CD4-positive, alpha-beta T cell (primary cell): ENCODE measurements at regions of chr17 and their contacts with region 1.

Region 1: DNA sequence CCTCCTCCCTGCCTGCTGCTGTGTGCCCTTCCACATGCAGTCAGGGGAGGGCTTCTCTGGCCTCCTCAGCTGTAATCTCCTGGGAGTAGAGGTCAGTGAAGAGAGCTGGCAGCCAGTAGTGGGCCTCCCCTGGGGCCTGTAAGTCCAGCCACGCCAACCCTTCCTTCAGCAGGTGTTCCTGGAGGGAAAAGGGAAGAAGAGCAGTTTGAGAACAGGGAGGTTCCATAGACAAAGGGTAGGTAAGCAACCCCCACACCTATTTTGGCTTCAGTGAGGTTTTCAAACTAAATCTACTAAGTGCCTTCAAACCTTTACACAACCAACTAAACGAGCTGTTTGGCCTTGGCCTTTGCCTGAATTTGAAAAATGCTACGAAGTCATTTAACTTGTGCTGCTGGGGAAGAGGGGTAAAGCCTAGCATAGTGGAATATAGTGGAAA is 14.2 kb downstream of the SNF8 start:
- DNase-seq: no peak
- ATAC-seq: no peak
- H3K4me3 ChIP-seq: no peak overlapping the region
- H3K4me3 Mint-ChIP-seq: no peak overlapping the region
- H3K27ac ChIP-seq: no peak overlapping the region
- H3K27ac Mint-ChIP-seq: peak overlapping the region; percentile 8
- H3K4me1 ChIP-seq: no peaks in the 10 kb centered on the region
- H3K4me1 Mint-ChIP-seq: no peaks in the 10 kb centered on the region
- H3K27me3 ChIP-seq: no peaks in the 10 kb centered on the region
- H3K27me3 Mint-ChIP-seq: no peaks in the 10 kb centered on the region
- CTCF ChIP-seq: no peak

Region 2: DNA sequence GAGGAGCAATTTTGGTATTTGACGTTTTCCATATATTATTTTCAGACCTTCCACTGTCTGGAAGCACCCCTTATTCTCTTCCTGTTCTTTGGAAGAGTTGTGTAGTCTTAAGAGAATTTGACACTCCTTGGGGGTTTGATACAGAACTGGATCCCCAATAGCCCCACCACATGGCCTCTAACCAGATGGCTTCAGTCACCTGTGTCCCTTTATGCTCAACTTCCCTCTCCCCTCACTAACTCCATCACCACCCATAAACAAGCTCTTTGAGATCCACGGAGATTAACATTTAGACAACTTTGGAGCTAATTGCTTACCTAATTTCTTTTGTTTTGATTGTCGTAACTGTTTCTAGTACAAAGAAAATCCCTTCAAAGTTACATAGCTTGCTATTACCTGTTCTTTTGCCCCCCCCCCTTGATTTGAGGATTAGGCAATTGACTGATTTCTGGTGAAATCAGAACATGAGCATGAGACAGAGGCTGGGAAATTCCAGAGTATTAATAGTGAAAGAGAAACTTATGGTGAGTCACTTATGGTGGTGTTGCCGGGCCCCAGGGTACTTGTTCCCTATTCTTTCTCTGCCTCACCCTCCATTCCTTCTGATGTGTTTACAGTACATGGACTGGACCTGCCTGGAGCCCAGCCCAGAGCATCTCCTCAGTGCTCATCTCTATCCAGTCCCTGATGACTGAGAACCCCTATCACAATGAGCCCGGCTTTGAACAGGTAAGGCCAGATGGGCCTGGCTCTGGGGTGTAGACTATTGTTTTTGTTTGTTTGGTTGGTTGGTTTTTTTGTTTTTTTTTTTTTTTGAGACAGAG is 14.8 kb before region 1 on chr17:
- CTCF ChIA-PET with region 1: no interaction called
- POLR2A ChIA-PET with region 1: no interaction called
- intact Hi-C with region 1: loop called in 1 of 2 experiments (anchors 2 kb)
- DNase-seq: peak in 5 of 14 experiments; percentile 2 to 81 (median 59)
- ATAC-seq: peak; percentile 80
- H3K4me3 ChIP-seq: no peak overlapping the region
- H3K4me3 Mint-ChIP-seq: peak overlapping the region; percentile 0
- H3K27ac ChIP-seq: peak overlapping the region in 1 of 2 donors; percentile 42
- H3K27ac Mint-ChIP-seq: peak overlapping the region; percentile 81
- H3K4me1 ChIP-seq: peaks cover 29% of the 10 kb centered on the region
- H3K4me1 Mint-ChIP-seq: peaks cover 54% of the 10 kb centered on the region
- H3K27me3 ChIP-seq: no peaks in the 10 kb centered on the region
- H3K27me3 Mint-ChIP-seq: no peaks in the 10 kb centered on the region
- CTCF ChIP-seq: no peak

Region 3: GRCh38 chr17:49125449-49125848 is 195.0 kb after region 1 on chr17:
- CTCF ChIA-PET with region 1: no interaction called
- POLR2A ChIA-PET with region 1: no interaction called
- intact Hi-C with region 1: no loop called
- DNase-seq: no peak
- ATAC-seq: no peak
- H3K4me3 ChIP-seq: no peak overlapping the region
- H3K4me3 Mint-ChIP-seq: no peak overlapping the region
- H3K27ac ChIP-seq: no peak overlapping the region
- H3K27ac Mint-ChIP-seq: no peak overlapping the region
- H3K4me1 ChIP-seq: no peaks in the 10 kb centered on the region
- H3K4me1 Mint-ChIP-seq: no peaks in the 10 kb centered on the region
- H3K27me3 ChIP-seq: peaks cover 2 to 17% of the 10 kb centered on the region in 2 experiments
- H3K27me3 Mint-ChIP-seq: peaks cover 51% of the 10 kb centered on the region
- CTCF ChIP-seq: no peak